Mammary epithelial cell (primary cell): ENCODE measurements at regions of chr22 and their contacts with region 1.

Region 1: DNA sequence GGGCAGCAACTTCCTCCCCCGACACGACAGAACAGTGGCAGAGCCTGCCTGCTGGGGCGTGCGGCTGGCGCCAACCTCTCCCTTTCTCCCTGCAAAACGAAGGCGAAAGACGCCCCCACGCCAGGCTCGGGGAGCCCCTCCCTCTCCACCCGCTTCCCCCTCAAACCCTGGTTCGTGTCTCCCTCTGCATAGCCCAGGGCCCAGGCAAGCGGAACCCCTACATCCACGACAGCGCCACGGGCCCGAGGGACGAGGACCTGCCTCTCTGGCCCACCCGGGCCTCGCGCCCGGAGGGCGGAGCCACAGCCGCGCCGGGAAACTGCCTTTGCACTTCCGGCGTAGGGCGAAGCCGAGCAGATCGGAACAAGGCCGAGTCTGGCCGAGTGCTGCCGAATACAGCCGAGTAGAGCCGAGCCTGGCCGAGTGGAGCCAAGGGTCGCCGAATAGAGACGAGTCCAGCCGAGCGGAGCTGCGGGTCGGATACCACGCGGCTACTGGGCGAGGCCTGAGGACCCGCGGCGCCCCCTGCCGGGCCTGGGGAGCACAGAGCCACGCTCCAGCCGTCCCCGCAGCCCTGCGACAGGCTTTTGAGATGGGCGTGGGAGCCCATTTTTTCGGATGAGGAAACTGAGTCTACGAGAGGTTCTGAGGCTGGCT is 11.2 kb upstream of the C1QTNF6 start:
- DNase-seq: peak; percentile 94
- H3K4me3 ChIP-seq: peak overlapping the region; percentile 70 to 87 (median 84)
- H3K27ac ChIP-seq: peak overlapping the region; percentile 65
- H3K4me1 ChIP-seq: peaks cover 35% of the 10 kb centered on the region
- H3K27me3 ChIP-seq: no peaks in the 10 kb centered on the region
- CTCF ChIP-seq: peak; percentile 68 to 87

Region 2: DNA sequence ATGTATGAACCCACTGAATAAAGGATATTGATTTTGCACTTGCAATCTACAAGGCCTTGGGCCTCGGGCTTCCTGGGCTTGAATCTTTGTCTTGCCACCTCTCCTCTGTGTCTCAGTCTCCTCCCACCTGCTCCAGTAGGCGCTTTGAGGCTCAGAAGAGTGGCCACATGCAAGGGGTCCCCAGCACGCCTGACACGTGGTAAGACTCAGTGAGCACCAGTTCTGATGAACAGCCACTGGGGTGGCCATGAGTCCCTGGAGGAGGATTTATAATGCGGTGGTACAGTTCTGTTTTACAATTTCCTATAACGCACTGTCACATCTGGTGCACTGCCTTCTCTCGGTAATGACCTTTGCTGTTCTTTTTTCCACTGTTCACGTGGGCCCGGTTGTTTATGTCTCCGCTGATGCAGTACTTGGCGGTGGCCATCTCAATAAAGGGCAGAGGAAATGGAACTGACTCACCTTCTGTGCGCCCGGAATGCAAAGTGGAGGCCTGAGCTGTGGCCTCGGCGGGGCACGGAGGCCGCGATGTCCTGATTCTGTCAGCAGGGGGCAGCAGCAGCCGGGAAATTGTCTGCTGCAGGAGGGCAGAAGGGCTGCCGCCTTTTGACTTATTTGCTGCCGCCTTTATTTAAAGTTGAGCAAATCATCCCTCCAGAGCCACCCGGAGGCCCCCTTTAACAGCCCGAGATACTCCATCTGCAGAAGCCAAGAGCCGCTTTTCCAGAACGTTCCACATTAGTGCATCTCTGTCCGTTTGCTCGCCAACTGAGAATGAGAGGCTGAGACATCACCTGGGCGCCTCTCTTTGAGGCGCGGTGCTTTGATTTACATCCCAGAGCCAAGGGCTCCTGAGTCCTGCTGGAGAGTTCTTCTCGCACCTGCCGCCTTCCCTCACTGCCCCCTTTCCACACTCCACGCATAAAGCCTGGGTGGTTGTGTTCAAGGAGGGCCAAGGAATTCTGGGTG is 417.3 kb before region 1 on chr22:
- CTCF ChIA-PET with region 1: no interaction called
- dilution Hi-C with region 1: no loop called
- in situ Hi-C with region 1: no loop called
- intact Hi-C with region 1: loop called (anchors 5 kb)
- DNase-seq: peak; percentile 77
- H3K4me3 ChIP-seq: no peak overlapping the region
- H3K27ac ChIP-seq: no peak overlapping the region
- H3K4me1 ChIP-seq: peaks cover 4% of the 10 kb centered on the region
- H3K27me3 ChIP-seq: no peaks in the 10 kb centered on the region
- CTCF ChIP-seq: peak; percentile 86 to 87

Region 3: GRCh38 chr22:36986242-36986821 is 212.9 kb before region 1 on chr22:
- CTCF ChIA-PET with region 1: no interaction called
- dilution Hi-C with region 1: no loop called
- in situ Hi-C with region 1: no loop called
- intact Hi-C with region 1: loop called (anchors 10 kb)
- DNase-seq: no peak
- H3K4me3 ChIP-seq: no peak overlapping the region
- H3K27ac ChIP-seq: no peak overlapping the region
- H3K4me1 ChIP-seq: no peaks in the 10 kb centered on the region
- H3K27me3 ChIP-seq: no peaks in the 10 kb centered on the region
- CTCF ChIP-seq: peak; percentile 69 to 80

Region 4: DNA sequence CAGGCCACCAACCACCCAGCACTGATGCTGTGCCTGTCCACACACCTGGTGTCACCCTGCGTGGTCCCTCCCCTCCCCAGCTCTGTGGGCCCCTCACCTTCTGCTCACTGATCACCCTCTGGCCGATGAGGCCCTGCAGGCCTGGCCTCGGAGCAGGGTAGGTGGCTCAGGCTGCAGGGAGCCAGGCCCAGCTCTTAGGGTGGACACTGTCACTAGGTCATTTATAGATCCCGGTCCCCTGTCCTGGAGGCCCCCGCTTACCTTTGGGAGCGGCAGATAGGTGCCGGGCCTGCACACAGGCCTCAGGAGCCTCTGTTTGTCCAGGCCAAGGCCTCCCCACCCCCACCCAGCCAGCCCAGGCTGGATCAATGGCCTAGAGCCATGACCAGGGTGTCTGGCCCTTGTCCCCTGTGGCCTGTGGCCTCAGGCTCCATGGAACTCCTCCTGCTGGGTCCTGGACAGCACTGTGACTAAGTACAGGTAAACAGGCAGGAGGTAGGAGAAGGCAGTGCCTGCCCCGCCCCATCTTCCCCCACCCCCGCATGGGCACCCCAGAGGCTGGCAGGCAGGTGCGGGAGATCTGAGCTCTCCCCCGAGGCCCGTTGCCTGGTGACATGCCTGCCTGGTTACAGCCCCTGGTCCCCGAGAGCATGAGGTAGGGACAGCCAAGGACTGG is 89.9 kb before region 1 on chr22 and contains the start of gene TMPRSS6:
- CTCF ChIA-PET with region 1: no interaction called
- dilution Hi-C with region 1: no loop called
- in situ Hi-C with region 1: no loop called
- intact Hi-C with region 1: no loop called
- DNase-seq: no peak
- H3K4me3 ChIP-seq: no peak within 1 kb of the TSS
- H3K27ac ChIP-seq: no peak within 1 kb of the TSS
- H3K4me1 ChIP-seq: no peaks in the 10 kb centered on the region
- H3K27me3 ChIP-seq: no peaks in the 10 kb centered on the region
- CTCF ChIP-seq: no peak
- total RNA-seq, gene TMPRSS6: not detected

Region 5: DNA sequence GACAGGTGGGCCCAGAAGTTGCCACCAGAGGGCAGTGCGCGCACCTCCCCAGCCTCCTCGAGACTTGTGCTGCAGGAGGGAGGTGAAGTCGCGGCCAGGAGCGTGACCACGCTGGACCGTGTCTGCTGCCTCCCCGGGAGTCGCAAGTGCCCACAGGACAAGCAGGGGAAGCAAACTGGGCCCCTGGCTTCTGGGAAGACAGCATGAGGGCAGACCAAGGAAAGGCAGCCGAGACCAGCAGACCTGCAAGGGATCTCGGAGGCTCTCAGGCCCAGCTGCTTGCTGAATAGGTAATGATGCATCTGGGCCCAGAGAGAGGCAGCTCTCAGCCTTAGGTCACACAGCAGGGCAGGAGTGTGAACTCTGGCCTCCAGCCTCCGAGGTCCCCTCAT is 32.6 kb before region 1 on chr22:
- CTCF ChIA-PET with region 1: no interaction called
- dilution Hi-C with region 1: no loop called
- in situ Hi-C with region 1: no loop called
- intact Hi-C with region 1: loop called (anchors 1 kb)
- DNase-seq: peak; percentile 53
- H3K4me3 ChIP-seq: no peak overlapping the region
- H3K27ac ChIP-seq: no peak overlapping the region
- H3K4me1 ChIP-seq: peaks cover 2% of the 10 kb centered on the region
- H3K27me3 ChIP-seq: no peaks in the 10 kb centered on the region
- CTCF ChIP-seq: peak; percentile 87 to 94

Region 6: GRCh38 chr22:37260901-37261336 is 61.7 kb after region 1 on chr22:
- CTCF ChIA-PET with region 1: no interaction called
- dilution Hi-C with region 1: no loop called
- in situ Hi-C with region 1: no loop called
- intact Hi-C with region 1: loop called (anchors 2 kb)
- DNase-seq: peak; percentile 35
- H3K4me3 ChIP-seq: no peak overlapping the region
- H3K27ac ChIP-seq: no peak overlapping the region
- H3K4me1 ChIP-seq: peaks cover 23% of the 10 kb centered on the region
- H3K27me3 ChIP-seq: no peaks in the 10 kb centered on the region
- CTCF ChIP-seq: peak; percentile 91 to 95